Common myeloid progenitor, CD34-positive (primary cell): ENCODE measurements at regions of chr22 and their contacts with region 1.

Region 1: DNA sequence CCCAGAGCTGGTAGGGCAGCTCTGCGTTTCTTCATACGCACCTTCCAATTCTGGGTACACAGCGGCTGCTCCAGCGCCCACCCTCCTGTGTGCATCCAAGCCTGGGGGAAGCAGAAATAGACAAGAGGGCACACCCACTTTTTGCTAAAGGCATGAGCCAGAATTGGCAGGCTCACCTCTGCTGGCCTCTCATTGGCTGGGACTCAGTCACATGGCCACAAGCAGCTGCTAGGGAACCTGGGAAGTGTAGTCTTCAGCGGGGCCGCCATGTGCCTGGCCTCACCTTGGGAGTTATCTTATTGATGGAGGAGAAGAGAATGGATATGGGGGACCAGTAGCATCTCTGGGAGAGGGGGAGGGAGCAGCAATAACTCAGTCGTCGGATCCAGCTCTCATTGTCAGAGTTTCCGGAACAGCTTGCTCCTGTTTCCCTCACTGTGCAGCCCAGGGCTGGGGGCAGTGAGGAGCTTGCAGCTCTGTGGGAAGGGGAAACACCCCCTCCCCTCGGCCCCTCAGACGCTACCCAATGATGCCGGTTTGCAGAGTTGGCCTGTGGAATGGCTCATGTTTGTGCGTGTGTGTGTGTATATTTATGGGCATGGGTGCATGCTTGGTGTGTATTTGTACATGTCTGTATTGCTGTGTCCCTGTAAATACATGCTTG is 11.8 kb upstream of the MIEF1 start:
- DNase-seq: peak; percentile 74 to 91 (median 90)
- H3K4me3 ChIP-seq: peak overlapping the region in 4 of 7 experiments; percentile 3 to 29 (median 24)
- H3K27ac ChIP-seq: no peak overlapping the region
- H3K4me1 ChIP-seq: peaks cover 0 to 24% (median 6%) of the 10 kb centered on the region in 4 experiments
- H3K27me3 ChIP-seq: no peaks in the 10 kb centered on the region

Region 2: DNA sequence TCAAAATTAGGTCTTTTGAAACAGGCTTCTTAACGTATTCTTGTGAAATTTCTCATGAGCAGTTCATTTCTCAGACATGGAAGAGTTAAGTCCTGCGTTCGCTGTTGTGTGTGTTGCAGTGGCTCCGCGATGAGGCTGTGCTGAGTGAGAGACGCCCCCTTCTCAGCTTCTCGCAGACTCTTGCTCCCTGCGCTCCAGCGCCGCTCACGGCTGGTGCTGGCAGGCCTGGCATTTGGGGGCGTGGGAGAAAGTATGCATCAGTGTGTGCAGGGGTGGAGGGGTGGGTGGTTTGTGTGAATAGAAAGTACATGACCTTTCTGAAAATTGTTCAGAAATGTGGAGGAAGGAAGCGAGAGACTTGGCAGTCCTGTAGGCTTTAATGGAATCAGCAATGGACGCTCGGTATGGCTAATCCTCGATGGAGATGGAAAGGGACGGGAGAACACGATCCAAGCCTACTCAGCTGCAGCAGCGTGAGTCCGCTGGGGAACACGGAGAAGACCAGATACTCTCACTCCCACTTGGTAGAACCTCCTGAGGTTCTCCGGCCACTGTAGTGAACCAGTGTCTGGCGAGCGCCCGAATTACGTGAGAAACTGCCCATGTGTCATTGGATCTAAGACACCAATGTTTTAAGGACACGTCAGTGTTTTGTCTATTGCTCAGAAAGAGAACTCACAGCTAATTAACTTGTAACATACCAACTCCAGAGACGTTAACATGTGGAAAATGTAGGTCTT is 84.8 kb before region 1 on chr22:
- CTCF ChIA-PET with region 1: no interaction called
- POLR2A ChIA-PET with region 1: no interaction called
- DNase-seq: no peak
- H3K4me3 ChIP-seq: no peak overlapping the region
- H3K27ac ChIP-seq: no peak overlapping the region
- H3K4me1 ChIP-seq: peaks cover 2 to 21% (median 8%) of the 10 kb centered on the region in 4 experiments
- H3K27me3 ChIP-seq: no peaks in the 10 kb centered on the region

Region 3: GRCh38 chr22:39439170-39439569 is 51.1 kb before region 1 on chr22:
- CTCF ChIA-PET with region 1: interaction called, 11 read pairs
- POLR2A ChIA-PET with region 1: no interaction called
- DNase-seq: peak in 2 of 3 donors; percentile 41 to 53
- H3K4me3 ChIP-seq: no peak overlapping the region
- H3K27ac ChIP-seq: no peak overlapping the region
- H3K4me1 ChIP-seq: peaks cover 0 to 40% (median 14%) of the 10 kb centered on the region in 4 experiments
- H3K27me3 ChIP-seq: no peaks in the 10 kb centered on the region

Region 4: DNA sequence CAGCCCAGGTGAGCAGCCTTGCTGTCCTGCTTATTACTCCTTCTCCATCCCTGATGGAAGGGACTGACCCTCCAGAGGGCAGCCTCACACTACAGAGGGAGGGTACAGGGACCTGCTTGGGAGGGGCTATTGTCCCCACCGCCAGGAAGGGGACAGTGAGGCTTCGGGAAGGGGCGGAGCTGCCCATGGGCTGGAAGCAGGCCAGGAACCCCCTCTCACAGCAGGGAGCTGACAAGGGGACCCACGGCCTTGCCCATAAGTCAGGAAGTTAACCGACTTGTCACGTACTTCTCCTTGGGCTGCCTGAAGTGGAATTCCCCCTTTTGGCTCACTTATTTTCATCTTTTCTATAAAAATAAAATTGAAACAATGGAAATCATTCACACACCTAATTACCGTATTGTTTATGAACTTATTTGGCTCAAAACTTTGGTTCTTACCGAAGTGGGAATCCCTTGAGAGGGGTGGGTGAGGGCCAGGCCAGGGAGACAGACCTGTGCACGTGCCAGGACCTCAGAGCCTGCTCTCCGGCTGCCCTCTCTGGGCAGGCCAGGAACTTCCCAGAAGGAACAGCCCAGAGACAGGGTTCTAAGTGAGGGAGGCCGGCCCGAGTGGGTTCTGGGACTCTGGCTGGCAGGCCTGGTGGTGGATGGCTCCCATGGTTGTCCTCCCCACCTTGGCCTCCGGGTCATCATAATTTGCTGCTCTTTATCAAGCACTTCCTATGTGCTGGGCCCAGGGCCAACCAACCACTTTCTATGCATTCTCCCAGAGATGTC is 27.6 kb before region 1 on chr22:
- CTCF ChIA-PET with region 1: interaction called, 10 read pairs
- POLR2A ChIA-PET with region 1: no interaction called
- DNase-seq: peak; percentile 72 to 90 (median 89)
- H3K4me3 ChIP-seq: peak overlapping the region in 1 of 7 experiments; percentile 33
- H3K27ac ChIP-seq: peak overlapping the region; percentile 84 to 88
- H3K4me1 ChIP-seq: peaks cover 0 to 75% (median 37%) of the 10 kb centered on the region in 4 experiments
- H3K27me3 ChIP-seq: peaks cover 0 to 16% (median 8%) of the 10 kb centered on the region in 5 experiments

Region 5: GRCh38 chr22:39474351-39475111 is 15.7 kb before region 1 on chr22:
- CTCF ChIA-PET with region 1: interaction called, 21 read pairs
- POLR2A ChIA-PET with region 1: no interaction called
- DNase-seq: no peak
- H3K4me3 ChIP-seq: no peak overlapping the region
- H3K27ac ChIP-seq: no peak overlapping the region
- H3K4me1 ChIP-seq: peaks cover 1 to 58% (median 35%) of the 10 kb centered on the region in 4 experiments
- H3K27me3 ChIP-seq: no peaks in the 10 kb centered on the region

Region 6: DNA sequence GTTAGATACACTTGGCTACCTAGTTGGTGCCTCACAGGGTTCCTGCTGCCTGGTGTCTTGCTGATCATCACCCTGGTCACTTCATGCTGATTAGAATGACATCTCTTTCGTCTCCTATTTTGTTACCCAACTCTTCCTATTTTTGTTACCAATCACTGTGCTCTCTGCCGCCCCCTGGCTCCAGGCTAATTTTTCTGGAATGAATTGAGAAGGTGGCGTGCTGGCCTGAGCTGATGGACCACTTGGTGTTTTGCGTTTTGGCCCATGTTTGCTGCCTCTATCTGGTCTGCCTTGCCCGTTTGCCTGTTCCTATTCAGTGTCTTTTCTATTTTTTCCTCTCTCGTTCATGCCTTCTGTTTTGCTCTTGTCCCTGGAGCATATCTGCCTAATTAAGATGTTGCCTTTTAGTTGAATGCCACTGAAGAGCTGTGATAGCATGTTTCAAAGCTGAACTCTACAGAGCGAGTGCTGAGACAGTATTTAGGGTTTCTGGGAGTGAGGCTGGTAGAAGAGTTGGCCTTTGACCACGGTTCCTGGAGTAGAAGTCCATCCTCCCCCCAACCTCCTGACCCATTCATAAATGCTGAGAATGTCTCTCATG is 24.2 kb after region 1 on chr22:
- CTCF ChIA-PET with region 1: interaction called, 254 read pairs
- POLR2A ChIA-PET with region 1: interaction called, 3 read pairs
- DNase-seq: peak in 2 of 3 donors; percentile 53 to 67
- H3K4me3 ChIP-seq: no peak overlapping the region
- H3K27ac ChIP-seq: no peak overlapping the region
- H3K4me1 ChIP-seq: peaks cover 5 to 17% (median 15%) of the 10 kb centered on the region in 4 experiments
- H3K27me3 ChIP-seq: no peaks in the 10 kb centered on the region